Adrenal gland (tissue), 19 donors: ENCODE measurements at regions of chr19 and their contacts with region 1.

Region 1: GRCh38 chr19:2543463-2544442 is 67.8 kb downstream of the GADD45B start:
- DNase-seq: peak; percentile 93 to 99 (median 98)
- H3K4me3 ChIP-seq: no peak overlapping the region
- H3K27ac ChIP-seq: peak overlapping the region; percentile 88 to 98 (median 97)
- H3K4me1 ChIP-seq: peaks cover 40 to 69% of the 10 kb centered on the region in 2 donors
- H3K27me3 ChIP-seq: no peaks in the 10 kb centered on the region
- CTCF ChIP-seq: peak in 3 of 6 experiments; percentile 8 to 34 (median 9)
- POLR2A ChIP-seq: peak; percentile 67 to 93

Region 2: DNA sequence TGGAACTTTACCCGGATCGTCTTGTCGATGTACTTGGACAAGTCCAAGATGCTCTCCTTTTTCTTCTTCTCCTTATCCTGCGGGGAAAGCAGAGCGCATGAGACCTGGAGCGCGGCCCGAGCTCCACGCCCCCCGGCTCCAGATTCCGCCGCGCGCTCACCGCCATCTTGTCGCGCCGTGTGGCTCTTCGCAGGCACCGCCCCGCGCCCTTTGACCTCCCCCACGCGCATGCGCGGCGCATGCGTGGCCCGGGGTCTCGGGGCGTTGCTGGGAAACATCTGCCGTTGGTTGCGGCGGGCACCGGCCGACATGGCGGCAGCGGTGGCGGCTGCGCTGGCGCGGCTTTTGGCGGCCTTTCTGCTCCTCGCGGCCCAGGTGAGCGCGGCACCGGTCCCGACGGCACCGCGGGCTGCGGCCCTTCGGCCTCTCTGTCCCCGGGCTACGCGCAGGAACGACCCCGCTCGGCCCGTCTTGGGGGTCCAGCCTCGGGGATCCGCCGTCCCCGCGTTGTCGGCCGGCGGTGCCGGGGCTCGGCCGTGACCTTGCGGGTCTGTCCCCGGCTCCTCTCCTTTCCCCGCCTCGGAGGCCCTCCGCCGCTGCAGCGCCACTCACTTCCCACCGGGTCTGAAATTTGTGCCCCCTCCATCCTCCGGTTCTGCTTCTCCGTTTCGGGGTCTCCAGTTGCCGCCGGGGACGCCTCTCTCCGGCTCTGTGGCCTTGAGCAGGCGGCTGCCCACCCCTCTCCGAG is 215.2 kb before region 1 on chr19 and contains the starts of genes LSM7 and SPPL2B:
- intact Hi-C with region 1: no loop called
- DNase-seq: peak; percentile 86 to 94 (median 90)
- H3K4me3 ChIP-seq: peak within 1 kb of the TSS; percentile 55 to 95 (median 80)
- H3K27ac ChIP-seq: peak within 1 kb of the TSS in 4 of 5 donors; percentile 10 to 61 (median 32)
- H3K4me1 ChIP-seq: peaks cover 17 to 27% of the 10 kb centered on the region in 2 donors
- H3K27me3 ChIP-seq: no peaks in the 10 kb centered on the region
- CTCF ChIP-seq: no peak
- POLR2A ChIP-seq: peak; percentile 14 to 30
- total RNA-seq, gene LSM7: 50.5 to 122 (median 74.6) TPM
- total RNA-seq, gene SPPL2B: 12.3 to 71.0 (median 28.6) TPM

Region 3: DNA sequence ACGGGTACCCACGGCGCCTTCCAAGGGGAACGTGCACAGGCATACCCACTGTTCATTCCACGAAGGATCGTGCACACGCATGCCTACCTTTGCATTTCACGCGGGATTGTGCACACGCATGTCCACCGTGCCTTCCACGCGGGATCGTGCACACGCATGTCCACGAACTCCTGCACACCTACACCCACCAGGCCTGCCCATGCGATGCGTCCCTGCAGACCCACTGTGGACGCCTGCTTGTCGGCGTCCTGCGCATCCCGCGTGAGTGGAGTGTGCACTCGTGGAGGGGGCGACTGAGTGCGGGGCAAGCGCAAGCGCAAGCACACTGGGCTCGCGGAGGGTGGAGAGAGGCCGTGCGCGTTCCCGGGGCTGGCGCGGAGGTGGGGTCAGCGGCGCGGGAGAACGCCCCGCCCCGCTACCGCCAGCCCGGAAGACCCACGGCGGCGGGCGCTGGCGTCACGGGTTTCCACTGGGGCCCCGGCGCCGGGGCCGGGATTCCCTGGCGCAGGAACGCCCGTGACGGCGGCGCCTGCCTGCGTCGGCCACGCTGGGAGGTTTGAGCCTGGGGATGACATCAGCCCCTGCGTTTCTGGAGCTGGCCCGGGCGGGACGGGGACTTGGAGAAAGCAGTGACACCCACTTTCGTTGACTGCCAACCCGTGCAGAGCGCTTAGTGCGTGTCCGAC is 49.2 kb before region 1 on chr19:
- intact Hi-C with region 1: loop called in 1 of 2 experiments (anchors 10 kb)
- DNase-seq: peak; percentile 80 to 89 (median 87)
- H3K4me3 ChIP-seq: peak overlapping the region in 2 of 4 donors; percentile 50 to 61
- H3K27ac ChIP-seq: peak overlapping the region in 4 of 5 donors; percentile 71 to 88 (median 78)
- H3K4me1 ChIP-seq: peaks cover 15 to 29% of the 10 kb centered on the region in 2 donors
- H3K27me3 ChIP-seq: no peaks in the 10 kb centered on the region
- CTCF ChIP-seq: no peak
- POLR2A ChIP-seq: peak; percentile 43 to 52

Region 4: GRCh38 chr19:2507109-2507508 is 36.6 kb before region 1 on chr19:
- intact Hi-C with region 1: no loop called
- DNase-seq: no peak
- H3K4me3 ChIP-seq: peak overlapping the region in 1 of 4 donors; percentile 19
- H3K27ac ChIP-seq: no peak overlapping the region
- H3K4me1 ChIP-seq: no peaks in the 10 kb centered on the region
- H3K27me3 ChIP-seq: no peaks in the 10 kb centered on the region
- CTCF ChIP-seq: no peak
- POLR2A ChIP-seq: no peak

Region 5: GRCh38 chr19:2578901-2579677 is 35.3 kb after region 1 on chr19:
- intact Hi-C with region 1: loop called in 1 of 2 experiments (anchors 5 kb)
- DNase-seq: peak; percentile 86 to 96 (median 92)
- H3K4me3 ChIP-seq: peak overlapping the region in 2 of 4 donors; percentile 4 to 58
- H3K27ac ChIP-seq: peak overlapping the region; percentile 55 to 95 (median 79)
- H3K4me1 ChIP-seq: peaks cover 16 to 24% of the 10 kb centered on the region in 2 donors
- H3K27me3 ChIP-seq: no peaks in the 10 kb centered on the region
- CTCF ChIP-seq: peak; percentile 85 to 98 (median 96)
- POLR2A ChIP-seq: peak in 1 of 2 donors; percentile 61

Region 6: GRCh38 chr19:2627319-2627829 is 83.6 kb after region 1 on chr19:
- intact Hi-C with region 1: no loop called
- DNase-seq: peak; percentile 83 to 98 (median 96)
- H3K4me3 ChIP-seq: no peak overlapping the region
- H3K27ac ChIP-seq: peak overlapping the region; percentile 73 to 96 (median 85)
- H3K4me1 ChIP-seq: peaks cover 11 to 24% of the 10 kb centered on the region in 2 donors
- H3K27me3 ChIP-seq: no peaks in the 10 kb centered on the region
- CTCF ChIP-seq: no peak
- POLR2A ChIP-seq: peak in 1 of 2 donors; percentile 78